ENCODE measurements at regions of chr7 and their contacts with region 1.

Region 1: GRCh38 chr7:148698397-148699023 is at the start of gene CUL1:
- DNase-seq: peak; percentile 90 to 94
- ATAC-seq: peak; percentile 83 to 87 (median 84)
- H3K4me3 ChIP-seq: peak within 1 kb of the TSS; percentile 97
- H3K27ac ChIP-seq: peak within 1 kb of the TSS; percentile 99
- H3K4me1 ChIP-seq: peaks cover 35% of the 10 kb centered on the region
- H3K27me3 ChIP-seq: no peaks in the 10 kb centered on the region
- CTCF ChIP-seq: no peak
- total RNA-seq, gene CUL1: 65.1 to 97.1 (median 88.8) TPM

Region 2: GRCh38 chr7:147968046-147968610 is 730.4 kb before region 1 on chr7:
- intact Hi-C with region 1: no loop called
- DNase-seq: no peak
- ATAC-seq: no peak
- H3K4me3 ChIP-seq: no peak overlapping the region
- H3K27ac ChIP-seq: no peak overlapping the region
- H3K4me1 ChIP-seq: no peaks in the 10 kb centered on the region
- H3K27me3 ChIP-seq: no peaks in the 10 kb centered on the region
- CTCF ChIP-seq: no peak

Region 3: GRCh38 chr7:148575640-148576411 is 122.7 kb before region 1 on chr7:
- intact Hi-C with region 1: loop called in 1 of 2 experiments (anchors 10 kb)
- DNase-seq: peak; percentile 58 to 71
- ATAC-seq: peak; percentile 65 to 87 (median 73)
- H3K4me3 ChIP-seq: no peak overlapping the region
- H3K27ac ChIP-seq: no peak overlapping the region
- H3K4me1 ChIP-seq: no peaks in the 10 kb centered on the region
- H3K27me3 ChIP-seq: no peaks in the 10 kb centered on the region
- CTCF ChIP-seq: peak; percentile 84

Region 4: GRCh38 chr7:148615085-148615730 is 83.3 kb before region 1 on chr7:
- intact Hi-C with region 1: no loop called
- DNase-seq: no peak
- ATAC-seq: no peak
- H3K4me3 ChIP-seq: no peak overlapping the region
- H3K27ac ChIP-seq: no peak overlapping the region
- H3K4me1 ChIP-seq: no peaks in the 10 kb centered on the region
- H3K27me3 ChIP-seq: peaks cover 0 to 11% (median 0%) of the 10 kb centered on the region in 3 donors
- CTCF ChIP-seq: no peak

Region 5: GRCh38 chr7:148738737-148739535 is 40.4 kb after region 1 on chr7:
- intact Hi-C with region 1: loop called in 1 of 2 experiments (anchors 5 kb)
- DNase-seq: no peak
- ATAC-seq: peak; percentile 87 to 93 (median 92)
- H3K4me3 ChIP-seq: peak overlapping the region; percentile 45
- H3K27ac ChIP-seq: peak overlapping the region; percentile 81
- H3K4me1 ChIP-seq: peaks cover 47% of the 10 kb centered on the region
- H3K27me3 ChIP-seq: no peaks in the 10 kb centered on the region
- CTCF ChIP-seq: no peak

Region 6: DNA sequence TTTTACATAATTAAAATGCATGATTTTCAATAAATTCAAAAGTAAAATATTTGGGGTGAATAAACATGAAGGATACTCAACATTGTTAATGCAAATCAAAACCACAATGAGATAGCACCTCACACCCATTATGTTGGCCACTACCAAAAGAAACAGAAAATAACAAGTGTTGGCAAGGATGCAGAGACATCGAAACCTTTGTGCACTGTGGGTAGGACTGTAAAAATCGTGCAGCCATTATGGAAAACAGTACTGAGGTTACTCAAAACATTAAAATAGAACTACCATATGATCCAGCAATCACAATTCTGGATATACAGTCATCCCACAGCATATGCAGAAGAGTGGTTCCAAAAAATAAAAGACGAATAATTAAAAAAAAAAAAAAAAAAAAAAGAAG is 172.5 kb after region 1 on chr7:
- intact Hi-C with region 1: no loop called
- DNase-seq: no peak
- ATAC-seq: no peak
- H3K4me3 ChIP-seq: no peak overlapping the region
- H3K27ac ChIP-seq: no peak overlapping the region
- H3K4me1 ChIP-seq: no peaks in the 10 kb centered on the region
- H3K27me3 ChIP-seq: no peaks in the 10 kb centered on the region
- CTCF ChIP-seq: no peak

Region 7: GRCh38 chr7:148884299-148885022 is 186.0 kb after region 1 on chr7:
- intact Hi-C with region 1: loop called in 1 of 2 experiments (anchors 10 kb)
- DNase-seq: peak; percentile 94 to 96
- ATAC-seq: peak; percentile 98 to 99 (median 99)
- H3K4me3 ChIP-seq: peak overlapping the region; percentile 93
- H3K27ac ChIP-seq: peak overlapping the region; percentile 93
- H3K4me1 ChIP-seq: no peaks in the 10 kb centered on the region
- H3K27me3 ChIP-seq: no peaks in the 10 kb centered on the region
- CTCF ChIP-seq: no peak

Region 8: DNA sequence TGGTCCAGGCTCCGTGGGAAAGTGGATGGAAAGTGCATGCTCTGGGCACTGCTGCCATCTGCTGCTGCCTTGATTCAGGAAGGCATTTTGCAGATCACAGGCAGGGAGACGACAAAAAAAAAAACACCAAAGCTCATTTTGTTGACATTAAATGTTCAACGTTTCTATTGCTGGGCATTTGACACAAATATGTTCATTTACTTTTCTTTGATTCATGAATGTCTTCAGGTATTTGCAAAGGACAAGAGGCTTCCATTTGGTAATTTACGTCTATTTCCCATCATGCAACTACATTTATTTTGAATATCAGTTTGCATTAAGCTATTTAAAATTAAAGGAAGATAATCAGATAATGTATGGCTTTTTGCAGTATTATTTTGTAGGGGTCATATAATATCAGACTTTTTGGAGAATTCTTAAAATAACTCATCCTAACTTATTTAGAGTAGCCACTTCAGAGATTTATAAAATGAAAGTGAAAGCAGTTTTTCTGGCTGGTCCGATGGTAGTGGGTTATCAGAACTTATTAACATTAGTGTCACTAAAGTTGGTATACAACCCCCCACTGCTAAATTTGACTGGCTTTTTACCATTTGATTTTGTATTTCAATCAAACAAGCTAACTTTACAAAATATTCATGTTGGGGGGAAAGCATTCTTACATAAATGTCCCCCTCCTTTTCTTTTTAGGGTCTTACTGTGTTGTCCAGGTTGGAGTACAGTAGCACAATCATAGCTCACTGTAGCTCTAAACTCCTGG is 264.5 kb after region 1 on chr7:
- intact Hi-C with region 1: loop called in 1 of 2 experiments (anchors 10 kb)
- DNase-seq: peak; percentile 61 to 81
- ATAC-seq: peak; percentile 81 to 89 (median 83)
- H3K4me3 ChIP-seq: peak overlapping the region; percentile 68
- H3K27ac ChIP-seq: peak overlapping the region; percentile 75
- H3K4me1 ChIP-seq: peaks cover 4% of the 10 kb centered on the region
- H3K27me3 ChIP-seq: no peaks in the 10 kb centered on the region
- CTCF ChIP-seq: peak; percentile 71